Head of caudate nucleus (tissue), 42 donors: ENCODE measurements at regions of chr4 and their contacts with region 1.

Region 1: GRCh38 chr4:147866532-147867271 is 134.8 kb downstream of the ARHGAP10 start:
- DNase-seq: peak; percentile 84 to 98 (median 95)

Region 2: GRCh38 chr4:147617173-147617840 is 249.4 kb before region 1 on chr4 and contains the start of gene TMEM184C:
- intact Hi-C with region 1: loop called (anchors 10 kb)
- DNase-seq: peak; percentile 97 to 99 (median 99)

Region 3: GRCh38 chr4:147707865-147708672 is 158.6 kb before region 1 on chr4:
- intact Hi-C with region 1: loop called (anchors 2 kb)
- DNase-seq: peak in 35 of 42 donors; percentile 14 to 83 (median 60)

Region 4: GRCh38 chr4:148044912-148045352 is 178.2 kb after region 1 on chr4:
- intact Hi-C with region 1: no loop called
- DNase-seq: no peak